CD14-positive monocyte (primary cell): ENCODE measurements at regions of chr21 and their contacts with region 1.

Region 1: GRCh38 chr21:27700974-27701614 is 734.2 kb upstream of the ADAMTS5 start:
- DNase-seq: peak; percentile 31 to 47 (median 33)
- H3K4me3 ChIP-seq: no peak overlapping the region
- H3K4me3 Mint-ChIP-seq: no peak overlapping the region
- H3K27ac ChIP-seq: no peak overlapping the region
- H3K27ac Mint-ChIP-seq: no peak overlapping the region
- H3K4me1 ChIP-seq: no peaks in the 10 kb centered on the region
- H3K4me1 Mint-ChIP-seq: no peaks in the 10 kb centered on the region
- H3K27me3 ChIP-seq: peaks cover 0 to 3% of the 10 kb centered on the region in 2 donors
- H3K27me3 Mint-ChIP-seq: peaks cover 2 to 4% (median 3%) of the 10 kb centered on the region in 3 donors
- CTCF ChIP-seq: peak; percentile 71

Region 2: DNA sequence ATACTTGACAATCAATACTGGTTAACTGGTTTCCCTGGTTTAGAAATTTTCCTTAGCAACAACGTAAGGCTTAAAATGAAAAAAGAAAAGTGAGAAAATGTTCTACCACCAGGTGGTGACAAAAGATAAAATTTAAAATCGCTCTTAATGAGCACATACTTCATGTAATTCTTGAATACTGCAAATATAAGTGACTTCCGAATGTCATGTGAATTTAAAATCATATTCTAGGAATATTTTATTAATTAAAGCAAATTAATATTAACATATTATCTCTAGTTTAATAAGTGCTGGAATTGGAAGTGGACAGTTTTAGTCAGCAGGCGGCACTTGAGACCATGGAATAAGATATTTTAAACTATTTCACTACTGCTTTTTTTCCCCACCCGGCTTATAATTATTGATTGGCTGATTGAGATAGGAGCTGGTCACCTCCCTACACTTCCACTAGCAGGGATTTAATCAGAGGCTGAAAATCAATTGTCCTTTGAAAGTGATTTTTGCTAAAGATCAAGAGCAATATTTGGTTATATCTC is 850.9 kb before region 1 on chr21:
- intact Hi-C with region 1: loop called (anchors 5 kb)
- DNase-seq: peak in 2 of 3 donors; percentile 12 to 40
- H3K4me3 ChIP-seq: no peak overlapping the region
- H3K4me3 Mint-ChIP-seq: no peak overlapping the region
- H3K27ac ChIP-seq: no peak overlapping the region
- H3K27ac Mint-ChIP-seq: no peak overlapping the region
- H3K4me1 ChIP-seq: peaks cover 15 to 17% of the 10 kb centered on the region in 2 donors
- H3K4me1 Mint-ChIP-seq: peaks cover 18% of the 10 kb centered on the region
- H3K27me3 ChIP-seq: peaks cover 39 to 40% of the 10 kb centered on the region in 2 donors
- H3K27me3 Mint-ChIP-seq: peaks cover 36 to 39% (median 36%) of the 10 kb centered on the region in 3 donors
- CTCF ChIP-seq: peak; percentile 80

Region 3: GRCh38 chr21:28357743-28358142 is 656.6 kb after region 1 on chr21:
- intact Hi-C with region 1: no loop called
- DNase-seq: no peak
- H3K4me3 ChIP-seq: no peak overlapping the region
- H3K4me3 Mint-ChIP-seq: no peak overlapping the region
- H3K27ac ChIP-seq: no peak overlapping the region
- H3K27ac Mint-ChIP-seq: no peak overlapping the region
- H3K4me1 ChIP-seq: no peaks in the 10 kb centered on the region
- H3K4me1 Mint-ChIP-seq: peaks cover 2% of the 10 kb centered on the region
- H3K27me3 ChIP-seq: no peaks in the 10 kb centered on the region
- H3K27me3 Mint-ChIP-seq: peaks cover 0 to 2% (median 0%) of the 10 kb centered on the region in 3 donors
- CTCF ChIP-seq: no peak